B cell (primary cell): ENCODE measurements at regions of chr2 and their contacts with region 1.

Region 1: DNA sequence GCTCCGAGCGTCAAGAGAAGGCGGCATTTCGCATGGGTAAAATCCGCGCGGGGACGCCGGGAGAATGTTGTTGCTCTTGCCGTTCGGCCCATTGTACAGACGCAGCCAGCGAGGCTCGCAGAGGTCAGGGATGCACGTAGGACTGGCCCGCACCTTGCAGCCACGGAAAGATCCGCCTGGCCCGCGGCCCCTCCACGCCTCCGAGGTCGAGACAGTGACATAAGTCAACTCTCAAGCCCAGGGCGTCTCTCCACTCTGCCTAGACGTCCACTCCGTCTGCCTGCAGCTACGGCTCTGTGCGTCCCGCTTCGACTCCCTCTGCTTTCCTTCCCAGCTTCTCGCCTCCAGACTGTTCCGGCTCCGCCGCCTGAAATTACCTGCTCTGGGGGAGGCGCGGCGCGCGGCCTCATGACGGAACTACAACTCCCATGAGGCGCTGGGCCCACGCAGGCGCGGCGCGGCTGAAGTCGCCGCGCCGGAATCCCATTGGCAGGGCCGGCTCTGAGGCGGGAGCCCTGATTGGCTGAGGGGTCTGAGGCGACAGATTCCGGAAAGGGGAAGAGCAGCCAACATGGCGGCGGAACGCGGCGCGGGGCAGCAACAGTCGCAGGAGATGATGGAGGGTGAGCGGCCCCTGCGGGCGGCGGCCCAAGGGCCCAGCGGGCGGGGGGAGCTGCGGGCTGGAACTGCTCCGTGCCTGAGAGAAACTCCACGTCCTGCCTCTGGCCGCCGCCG is at the start of gene PPP1R7:
- DNase-seq: peak; percentile 97
- ATAC-seq: peak; percentile 80
- H3K4me3 ChIP-seq: peak within 1 kb of the TSS; percentile 57 to 94 (median 84)
- H3K4me3 Mint-ChIP-seq: peak within 1 kb of the TSS; percentile 96
- H3K27ac ChIP-seq: peak within 1 kb of the TSS; percentile 12 to 80
- H3K27ac Mint-ChIP-seq: peak within 1 kb of the TSS; percentile 93
- H3K4me1 ChIP-seq: peaks cover 12 to 20% of the 10 kb centered on the region in 2 donors
- H3K4me1 Mint-ChIP-seq: peaks cover 35% of the 10 kb centered on the region
- H3K27me3 ChIP-seq: no peaks in the 10 kb centered on the region
- H3K27me3 Mint-ChIP-seq: no peaks in the 10 kb centered on the region
- CTCF ChIP-seq: peak; percentile 72
- total RNA-seq, gene PPP1R7: 50.9 and 51.7 TPM in 2 replicates

Region 2: DNA sequence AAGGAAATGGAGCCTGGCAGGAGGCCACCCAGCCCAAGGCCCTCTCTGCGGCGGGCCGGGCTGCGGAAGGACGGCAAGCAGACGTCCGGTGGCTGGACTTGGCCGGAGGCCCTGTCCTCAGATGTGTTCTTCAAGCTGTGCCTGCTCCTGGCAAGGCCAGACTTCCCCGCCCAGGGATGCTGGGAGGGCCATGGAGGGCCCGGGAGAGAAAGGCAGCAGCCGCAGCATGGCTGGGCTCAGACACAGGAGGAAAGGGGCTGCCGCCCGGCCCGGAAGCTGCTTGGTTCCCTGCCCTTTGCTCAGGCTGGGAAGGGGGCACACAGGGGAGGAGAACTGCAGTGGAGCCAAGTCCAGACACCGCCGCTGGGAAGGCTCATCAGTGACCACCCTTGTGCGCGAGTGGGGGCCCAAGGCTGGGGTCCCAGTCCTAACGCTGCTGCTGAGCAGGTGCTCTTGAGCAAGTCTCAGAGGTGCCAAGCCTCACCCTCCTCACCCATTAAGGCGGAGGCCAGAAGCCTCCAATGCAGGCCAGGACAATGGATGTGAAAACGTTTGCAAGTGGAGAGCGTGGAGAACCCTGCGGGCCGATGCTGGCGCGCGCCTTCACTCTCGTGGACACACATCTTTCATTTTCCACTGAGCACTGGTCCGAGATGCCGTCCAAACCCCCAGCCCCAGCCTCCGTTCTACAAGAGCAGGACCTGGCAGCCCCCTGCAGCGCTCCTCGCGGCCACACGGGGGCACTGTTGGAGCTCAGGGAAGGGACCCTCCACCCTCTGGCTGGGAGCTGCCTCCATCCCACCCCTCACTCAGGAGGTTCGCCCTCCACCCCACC is 236.1 kb before region 1 on chr2:
- CTCF ChIA-PET with region 1: interaction called, 15 read pairs
- POLR2A ChIA-PET with region 1: no interaction called
- intact Hi-C with region 1: loop called (anchors 1 kb)
- DNase-seq: peak; percentile 69
- ATAC-seq: peak; percentile 69
- H3K4me3 ChIP-seq: no peak overlapping the region
- H3K4me3 Mint-ChIP-seq: no peak overlapping the region
- H3K27ac ChIP-seq: no peak overlapping the region
- H3K27ac Mint-ChIP-seq: no peak overlapping the region
- H3K4me1 ChIP-seq: peaks cover 8 to 15% of the 10 kb centered on the region in 2 donors
- H3K4me1 Mint-ChIP-seq: peaks cover 10% of the 10 kb centered on the region
- H3K27me3 ChIP-seq: peaks cover 0 to 31% (median 9%) of the 10 kb centered on the region in 4 experiments
- H3K27me3 Mint-ChIP-seq: peaks cover 30% of the 10 kb centered on the region
- CTCF ChIP-seq: peak; percentile 88

Region 3: GRCh38 chr2:240998120-240998994 is 151.7 kb before region 1 on chr2 and contains the start of gene SNED1:
- CTCF ChIA-PET with region 1: no interaction called
- POLR2A ChIA-PET with region 1: no interaction called
- intact Hi-C with region 1: loop called (anchors 1 kb)
- DNase-seq: peak; percentile 76
- ATAC-seq: peak; percentile 88
- H3K4me3 ChIP-seq: peak within 1 kb of the TSS in 4 of 5 experiments; percentile 17 to 46 (median 36)
- H3K4me3 Mint-ChIP-seq: peak within 1 kb of the TSS; percentile 74
- H3K27ac ChIP-seq: no peak within 1 kb of the TSS
- H3K27ac Mint-ChIP-seq: no peak within 1 kb of the TSS
- H3K4me1 ChIP-seq: peaks cover 7 to 8% of the 10 kb centered on the region in 2 donors
- H3K4me1 Mint-ChIP-seq: peaks cover 11% of the 10 kb centered on the region
- H3K27me3 ChIP-seq: peaks cover 0 to 37% (median 8%) of the 10 kb centered on the region in 4 experiments
- H3K27me3 Mint-ChIP-seq: peaks cover 33% of the 10 kb centered on the region
- CTCF ChIP-seq: no peak
- total RNA-seq, gene SNED1: 336 and 346 TPM in 2 replicates

Region 4: DNA sequence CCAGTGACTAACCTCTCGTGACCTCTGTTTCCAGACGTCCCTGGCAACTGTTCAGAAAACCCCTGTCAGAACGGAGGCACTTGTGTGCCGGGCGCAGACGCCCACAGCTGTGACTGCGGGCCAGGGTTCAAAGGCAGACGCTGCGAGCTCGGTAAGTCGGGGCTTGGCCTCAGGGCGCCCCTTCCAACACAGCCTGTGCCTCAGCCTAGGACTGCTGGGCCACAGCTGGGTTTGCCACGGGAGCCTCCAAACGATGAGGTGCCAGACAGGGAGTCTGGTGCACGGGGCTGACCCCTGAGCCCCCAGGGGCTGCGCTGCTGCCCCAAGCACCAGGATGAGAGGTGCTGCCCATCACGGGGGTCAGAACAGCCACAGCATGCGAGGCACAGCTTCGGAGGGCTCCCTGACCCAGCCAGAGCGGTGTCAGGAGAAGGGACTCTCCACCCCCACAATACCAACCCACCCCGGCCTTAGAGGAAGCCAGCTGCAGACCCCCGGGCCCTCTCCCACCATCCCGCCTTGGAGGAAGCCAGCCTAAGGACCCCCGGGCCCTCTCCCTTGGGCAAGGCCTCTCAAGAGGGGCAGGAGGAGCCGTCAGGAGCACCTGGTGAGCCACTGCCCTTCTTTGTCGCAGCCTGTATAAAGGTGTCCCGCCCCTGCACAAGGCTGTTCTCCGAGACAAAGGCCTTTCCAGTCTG is 68.3 kb before region 1 on chr2:
- CTCF ChIA-PET with region 1: interaction called, 101 read pairs
- POLR2A ChIA-PET with region 1: interaction called, 13 read pairs
- intact Hi-C with region 1: loop called (anchors 1 kb)
- DNase-seq: no peak
- ATAC-seq: no peak
- H3K4me3 ChIP-seq: no peak overlapping the region
- H3K4me3 Mint-ChIP-seq: no peak overlapping the region
- H3K27ac ChIP-seq: no peak overlapping the region
- H3K27ac Mint-ChIP-seq: peak overlapping the region; percentile 64
- H3K4me1 ChIP-seq: no peaks in the 10 kb centered on the region
- H3K4me1 Mint-ChIP-seq: peaks cover 10% of the 10 kb centered on the region
- H3K27me3 ChIP-seq: no peaks in the 10 kb centered on the region
- H3K27me3 Mint-ChIP-seq: no peaks in the 10 kb centered on the region
- CTCF ChIP-seq: no peak

Region 5: GRCh38 chr2:241102239-241102803 is 47.8 kb before region 1 on chr2 and contains the start of gene MTERF4:
- CTCF ChIA-PET with region 1: interaction called, 31 read pairs
- POLR2A ChIA-PET with region 1: interaction called, 12 read pairs
- intact Hi-C with region 1: loop called (anchors 1 kb)
- DNase-seq: peak; percentile 93
- ATAC-seq: peak; percentile 91
- H3K4me3 ChIP-seq: peak within 1 kb of the TSS; percentile 73 to 95 (median 93)
- H3K4me3 Mint-ChIP-seq: peak within 1 kb of the TSS; percentile 98
- H3K27ac ChIP-seq: peak within 1 kb of the TSS; percentile 88 to 89
- H3K27ac Mint-ChIP-seq: peak within 1 kb of the TSS; percentile 97
- H3K4me1 ChIP-seq: peaks cover 43 to 56% of the 10 kb centered on the region in 2 donors
- H3K4me1 Mint-ChIP-seq: peaks cover 49% of the 10 kb centered on the region
- H3K27me3 ChIP-seq: no peaks in the 10 kb centered on the region
- H3K27me3 Mint-ChIP-seq: no peaks in the 10 kb centered on the region
- CTCF ChIP-seq: no peak
- total RNA-seq, gene MTERF4: 153 and 159 TPM in 2 replicates

Region 6: DNA sequence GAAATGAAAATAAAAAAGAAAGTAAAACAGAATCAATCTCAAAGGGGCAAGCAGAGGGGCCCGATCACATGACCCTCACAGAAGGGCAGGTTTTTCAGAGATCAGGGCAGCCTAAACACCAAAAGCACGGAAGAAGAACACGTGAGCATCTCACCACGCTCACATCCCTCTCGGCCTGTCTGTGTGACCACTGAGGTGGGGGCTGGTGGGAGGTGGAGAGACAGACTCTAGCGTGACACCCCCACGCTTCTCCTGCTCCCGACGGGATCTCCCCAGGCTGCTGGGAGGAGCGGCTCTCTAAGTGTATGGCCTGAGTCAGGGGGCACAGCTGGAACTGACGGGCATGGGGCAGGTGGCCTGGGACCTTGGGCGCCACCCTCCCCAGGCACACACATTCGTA is 24.5 kb before region 1 on chr2:
- CTCF ChIA-PET with region 1: interaction called, 6 read pairs
- POLR2A ChIA-PET with region 1: interaction called, 5 read pairs
- intact Hi-C with region 1: loop called (anchors 1 kb)
- DNase-seq: peak; percentile 63
- ATAC-seq: no peak
- H3K4me3 ChIP-seq: peak overlapping the region in 1 of 5 experiments; percentile 10
- H3K4me3 Mint-ChIP-seq: peak overlapping the region; percentile 67
- H3K27ac ChIP-seq: peak overlapping the region; percentile 94 to 97
- H3K27ac Mint-ChIP-seq: peak overlapping the region; percentile 99
- H3K4me1 ChIP-seq: peaks cover 44 to 61% of the 10 kb centered on the region in 2 donors
- H3K4me1 Mint-ChIP-seq: peaks cover 53% of the 10 kb centered on the region
- H3K27me3 ChIP-seq: no peaks in the 10 kb centered on the region
- H3K27me3 Mint-ChIP-seq: no peaks in the 10 kb centered on the region
- CTCF ChIP-seq: no peak

Region 7: DNA sequence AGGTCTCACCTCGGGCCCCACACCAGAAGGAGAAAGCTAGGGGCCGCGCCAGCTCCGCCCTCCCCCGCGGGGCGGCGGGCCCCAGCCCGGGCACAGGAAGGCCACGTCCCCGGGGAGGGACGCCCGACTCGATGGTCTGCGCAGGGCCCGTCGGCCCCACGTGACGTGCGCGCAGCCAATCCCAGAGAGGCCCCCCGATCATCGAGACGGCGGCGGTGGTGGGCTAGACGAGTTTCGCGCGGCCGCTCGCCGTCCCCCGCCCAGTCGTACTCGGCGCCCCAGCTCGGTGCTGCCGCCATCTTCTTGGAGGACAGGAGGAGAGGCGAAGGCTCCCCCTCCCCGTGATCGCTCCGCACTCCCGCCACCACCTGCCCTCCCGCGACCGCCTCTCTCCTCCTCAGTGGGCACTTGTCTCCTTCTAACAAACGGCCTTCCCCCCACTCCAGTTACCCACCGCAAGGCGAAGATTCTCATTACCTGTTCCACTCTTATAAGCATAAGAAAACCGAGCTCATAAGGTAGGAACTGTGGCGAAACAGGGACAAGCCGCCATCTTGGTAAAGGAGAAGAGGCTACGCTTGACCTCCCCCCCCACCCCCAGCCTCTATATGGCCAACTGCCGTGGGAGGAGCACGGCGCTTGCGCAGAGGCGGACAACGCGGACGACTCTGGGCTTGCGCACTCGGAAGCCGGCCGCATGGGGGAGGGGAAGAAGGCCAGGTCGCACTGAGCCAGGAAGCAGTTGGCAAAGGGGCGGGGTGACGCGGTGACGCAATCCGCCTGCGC is 165.2 kb after region 1 on chr2 and contains the start of gene HDLBP:
- CTCF ChIA-PET with region 1: no interaction called
- POLR2A ChIA-PET with region 1: no interaction called
- intact Hi-C with region 1: loop called (anchors 1 kb)
- DNase-seq: peak; percentile 100
- ATAC-seq: peak; percentile 69
- H3K4me3 ChIP-seq: peak within 1 kb of the TSS; percentile 90 to 99 (median 91)
- H3K4me3 Mint-ChIP-seq: peak within 1 kb of the TSS; percentile 95
- H3K27ac ChIP-seq: peak within 1 kb of the TSS; percentile 98 to 99
- H3K27ac Mint-ChIP-seq: peak within 1 kb of the TSS; percentile 99
- H3K4me1 ChIP-seq: peaks cover 43 to 47% of the 10 kb centered on the region in 2 donors
- H3K4me1 Mint-ChIP-seq: peaks cover 72% of the 10 kb centered on the region
- H3K27me3 ChIP-seq: no peaks in the 10 kb centered on the region
- H3K27me3 Mint-ChIP-seq: no peaks in the 10 kb centered on the region
- CTCF ChIP-seq: peak; percentile 39
- total RNA-seq, gene HDLBP: 127 and 153 TPM in 2 replicates